HepG2 (cell line): ENCODE measurements at regions of chr1 and their contacts with region 1.

Region 1: DNA sequence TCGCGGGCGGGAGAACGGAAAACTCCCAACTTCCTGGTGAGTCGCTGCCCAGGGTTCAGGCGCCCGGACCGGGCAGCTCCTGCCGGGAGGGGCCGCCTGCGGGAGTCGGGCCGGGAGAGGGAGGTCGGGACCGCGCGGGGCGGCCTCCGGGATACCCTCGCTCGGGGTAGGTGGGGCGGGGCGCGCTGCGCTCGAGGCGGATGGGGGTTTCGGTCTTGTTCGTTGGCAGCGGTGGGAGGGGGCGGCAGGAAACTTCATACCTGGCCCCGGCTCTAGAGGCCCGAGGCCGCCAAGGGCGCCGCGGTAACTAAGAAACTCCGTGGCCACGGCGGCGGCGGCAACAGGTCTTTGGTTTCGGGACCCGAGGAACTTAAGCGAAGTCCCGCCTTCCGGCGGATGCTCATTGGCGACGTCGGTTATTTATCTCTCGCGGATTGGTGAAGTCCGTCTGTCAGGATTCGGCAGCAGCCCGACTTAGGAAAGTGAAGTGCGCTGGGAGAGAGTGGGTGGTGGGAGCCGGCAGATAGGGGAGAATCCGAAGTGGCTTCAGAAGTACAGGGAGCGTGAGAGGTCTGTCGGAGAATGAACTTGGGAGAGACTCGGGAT is 546 bp downstream of the NEK7 start:
- DNase-seq: peak; percentile 88
- ATAC-seq: peak; percentile 73
- H3K4me3 ChIP-seq: peak overlapping the region; percentile 51 to 90 (median 85)
- H3K27ac ChIP-seq: peak overlapping the region; percentile 82
- H3K4me1 ChIP-seq: peaks cover 38% of the 10 kb centered on the region
- H3K27me3 ChIP-seq: no peaks in the 10 kb centered on the region; a peak in 1 of 5 replicates
- CTCF ChIP-seq: no peak
- EP300 ChIP-seq: no peak
- POLR2A ChIP-seq: peak in 1 of 2 experiments; percentile 33; a peak in 1 of 4 replicates
- RAD21 ChIP-seq: no peak; the same call in 1 of the 2 replicates

Region 2: GRCh38 chr1:197180252-197180878 is 977.0 kb before region 1 on chr1:
- CTCF ChIA-PET with region 1: no interaction called
- POLR2A ChIA-PET with region 1: no interaction called
- in situ Hi-C with region 1: no loop called
- intact Hi-C with region 1: loop called (anchors 10 kb)
- DNase-seq: peak; percentile 47
- ATAC-seq: peak; percentile 88
- H3K4me3 ChIP-seq: no peak overlapping the region
- H3K27ac ChIP-seq: no peak overlapping the region
- H3K4me1 ChIP-seq: peaks cover 3% of the 10 kb centered on the region; the same call in 1 of the 2 replicates
- H3K27me3 ChIP-seq: no peaks in the 10 kb centered on the region
- CTCF ChIP-seq: peak; percentile 69
- EP300 ChIP-seq: no peak
- POLR2A ChIP-seq: no peak
- RAD21 ChIP-seq: peak; percentile 49; the same call in 1 of the 2 replicates

Region 3: GRCh38 chr1:197521118-197521739 is 636.1 kb before region 1 on chr1:
- CTCF ChIA-PET with region 1: no interaction called
- POLR2A ChIA-PET with region 1: no interaction called
- in situ Hi-C with region 1: no loop called
- intact Hi-C with region 1: loop called (anchors 10 kb)
- DNase-seq: peak; percentile 23
- ATAC-seq: 0 out of 3 replicates have a peak, but pooled peaks have one; percentile 28
- H3K4me3 ChIP-seq: no peak overlapping the region
- H3K27ac ChIP-seq: no peak overlapping the region
- H3K4me1 ChIP-seq: no peaks in the 10 kb centered on the region
- H3K27me3 ChIP-seq: no peaks in the 10 kb centered on the region
- CTCF ChIP-seq: peak; percentile 59
- EP300 ChIP-seq: no peak
- POLR2A ChIP-seq: no peak
- RAD21 ChIP-seq: peak; percentile 39; the same call in 1 of the 2 replicates

Region 4: GRCh38 chr1:198132060-198132781 is 25.1 kb before region 1 on chr1:
- CTCF ChIA-PET with region 1: no interaction called
- POLR2A ChIA-PET with region 1: no interaction called
- in situ Hi-C with region 1: no loop called
- intact Hi-C with region 1: no loop called
- DNase-seq: no peak
- ATAC-seq: no peak
- H3K4me3 ChIP-seq: no peak overlapping the region
- H3K27ac ChIP-seq: no peak overlapping the region
- H3K4me1 ChIP-seq: no peaks in the 10 kb centered on the region
- H3K27me3 ChIP-seq: no peaks in the 10 kb centered on the region
- CTCF ChIP-seq: no peak
- EP300 ChIP-seq: no peak
- POLR2A ChIP-seq: no peak
- RAD21 ChIP-seq: no peak

Region 5: DNA sequence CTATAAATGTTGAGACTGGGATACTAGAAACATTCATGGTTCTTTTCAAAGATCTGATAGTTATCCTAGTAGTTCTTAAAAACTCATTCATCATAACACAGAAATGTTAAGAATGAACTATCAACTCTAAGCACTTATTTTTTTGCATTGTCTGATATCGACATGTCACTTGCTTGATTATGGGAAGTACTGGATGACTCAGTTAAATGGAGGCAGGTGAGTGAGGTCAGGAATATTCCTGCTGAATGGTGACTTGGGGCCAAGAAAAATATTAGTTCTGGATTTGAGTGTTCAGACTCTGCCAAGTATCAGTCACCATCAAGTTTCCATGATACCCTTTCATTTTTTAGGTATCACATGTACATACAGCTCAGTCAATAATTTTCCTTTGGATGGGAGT is 63.1 kb after region 1 on chr1:
- CTCF ChIA-PET with region 1: no interaction called
- POLR2A ChIA-PET with region 1: no interaction called
- in situ Hi-C with region 1: no loop called
- intact Hi-C with region 1: loop called (anchors 5 kb)
- DNase-seq: no peak
- ATAC-seq: no peak
- H3K4me3 ChIP-seq: no peak overlapping the region
- H3K27ac ChIP-seq: no peak overlapping the region
- H3K4me1 ChIP-seq: no peaks in the 10 kb centered on the region
- H3K27me3 ChIP-seq: no peaks in the 10 kb centered on the region
- CTCF ChIP-seq: no peak
- EP300 ChIP-seq: no peak
- POLR2A ChIP-seq: no peak
- RAD21 ChIP-seq: no peak

Region 6: DNA sequence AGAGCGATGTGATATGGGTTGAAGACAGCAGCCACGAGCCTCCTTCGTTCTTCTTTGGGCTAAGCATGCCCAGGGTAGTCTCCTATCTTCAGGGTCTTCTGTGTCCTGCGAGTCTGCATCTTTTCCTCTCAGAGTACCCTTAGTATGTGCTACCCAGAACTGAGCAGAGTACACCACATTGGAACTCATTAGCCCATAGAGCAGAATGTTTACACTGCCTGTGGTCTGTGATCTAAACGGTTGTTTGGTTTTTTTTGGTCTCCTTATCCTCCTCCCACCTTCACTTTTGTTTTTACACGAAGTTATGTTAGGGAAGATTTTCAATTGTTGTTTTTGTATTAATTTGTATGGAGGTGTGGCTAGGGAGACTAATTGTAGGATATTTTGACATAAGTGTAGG is 125.9 kb after region 1 on chr1:
- CTCF ChIA-PET with region 1: no interaction called
- POLR2A ChIA-PET with region 1: no interaction called
- in situ Hi-C with region 1: no loop called
- intact Hi-C with region 1: loop called (anchors 10 kb)
- DNase-seq: no peak
- ATAC-seq: peak; percentile 74
- H3K4me3 ChIP-seq: no peak overlapping the region
- H3K27ac ChIP-seq: no peak overlapping the region
- H3K4me1 ChIP-seq: peaks cover 10% of the 10 kb centered on the region; the same call in 1 of the 2 replicates
- H3K27me3 ChIP-seq: no peaks in the 10 kb centered on the region; a peak in 1 of 5 replicates
- CTCF ChIP-seq: no peak
- EP300 ChIP-seq: no peak
- POLR2A ChIP-seq: no peak
- RAD21 ChIP-seq: no peak

Region 7: GRCh38 chr1:198359024-198359653 is 201.8 kb after region 1 on chr1:
- CTCF ChIA-PET with region 1: no interaction called
- POLR2A ChIA-PET with region 1: no interaction called
- in situ Hi-C with region 1: no loop called
- intact Hi-C with region 1: loop called (anchors 5 kb)
- DNase-seq: peak; percentile 2
- ATAC-seq: no peak
- H3K4me3 ChIP-seq: no peak overlapping the region
- H3K27ac ChIP-seq: no peak overlapping the region
- H3K4me1 ChIP-seq: no peaks in the 10 kb centered on the region
- H3K27me3 ChIP-seq: no peaks in the 10 kb centered on the region
- CTCF ChIP-seq: peak; percentile 53
- EP300 ChIP-seq: no peak
- POLR2A ChIP-seq: no peak
- RAD21 ChIP-seq: no peak